Calu3 (cell line): ENCODE measurements at regions of chr1 and their contacts with region 1.

Region 1: DNA sequence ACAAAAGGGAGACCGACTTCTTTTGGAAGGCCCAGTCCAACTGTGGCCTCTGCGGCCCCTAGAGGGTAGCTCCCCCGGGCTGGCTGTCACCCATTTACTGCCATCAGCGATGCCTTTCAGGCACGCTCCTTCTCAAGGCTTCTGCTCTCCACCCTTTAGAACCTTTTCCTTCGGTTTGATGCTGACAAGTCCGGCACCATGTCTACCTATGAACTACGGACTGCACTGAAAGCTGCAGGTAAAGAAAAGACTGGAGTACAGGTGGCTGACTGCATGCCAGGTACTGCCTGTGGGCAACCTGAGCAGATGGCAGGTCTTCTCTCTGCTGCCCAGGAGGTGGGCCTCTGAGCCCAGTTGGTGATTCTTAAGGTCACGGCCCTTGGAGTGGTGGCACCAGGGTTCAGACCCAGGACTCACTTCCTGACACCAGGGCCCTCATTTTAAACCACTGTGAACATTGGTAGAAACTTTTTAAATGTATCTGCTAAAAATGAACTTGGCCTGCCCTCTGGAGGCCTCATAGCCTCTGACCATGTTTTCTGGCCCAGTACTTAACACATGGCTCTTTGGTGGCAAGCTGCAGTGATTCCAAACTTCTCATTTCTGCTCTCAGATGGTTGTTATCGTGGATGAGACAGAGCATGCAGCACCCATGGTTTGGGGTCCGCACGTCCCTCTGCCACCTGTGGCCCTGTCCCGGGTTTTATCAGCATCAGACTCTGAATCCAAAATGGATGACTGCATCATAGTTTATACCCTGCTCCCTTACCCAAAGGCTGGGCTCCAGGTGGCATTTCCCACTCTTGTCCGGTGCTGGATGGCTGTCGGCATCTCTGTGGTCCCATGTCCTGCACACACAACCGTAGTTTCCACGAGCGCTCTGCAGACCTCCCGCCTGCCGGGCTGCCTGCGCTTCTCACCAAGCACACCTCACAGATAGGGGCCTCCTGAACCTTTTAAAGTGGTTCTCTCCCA is 45.8 kb downstream of the CAPN9 start:
- DNase-seq: no peak
- H3K4me3 Mint-ChIP-seq: no peak overlapping the region
- H3K27ac Mint-ChIP-seq: no peak overlapping the region
- H3K4me1 Mint-ChIP-seq: no peaks in the 10 kb centered on the region
- H3K27me3 Mint-ChIP-seq: peaks cover 7% of the 10 kb centered on the region
- CTCF ChIP-seq: no peak

Region 2: DNA sequence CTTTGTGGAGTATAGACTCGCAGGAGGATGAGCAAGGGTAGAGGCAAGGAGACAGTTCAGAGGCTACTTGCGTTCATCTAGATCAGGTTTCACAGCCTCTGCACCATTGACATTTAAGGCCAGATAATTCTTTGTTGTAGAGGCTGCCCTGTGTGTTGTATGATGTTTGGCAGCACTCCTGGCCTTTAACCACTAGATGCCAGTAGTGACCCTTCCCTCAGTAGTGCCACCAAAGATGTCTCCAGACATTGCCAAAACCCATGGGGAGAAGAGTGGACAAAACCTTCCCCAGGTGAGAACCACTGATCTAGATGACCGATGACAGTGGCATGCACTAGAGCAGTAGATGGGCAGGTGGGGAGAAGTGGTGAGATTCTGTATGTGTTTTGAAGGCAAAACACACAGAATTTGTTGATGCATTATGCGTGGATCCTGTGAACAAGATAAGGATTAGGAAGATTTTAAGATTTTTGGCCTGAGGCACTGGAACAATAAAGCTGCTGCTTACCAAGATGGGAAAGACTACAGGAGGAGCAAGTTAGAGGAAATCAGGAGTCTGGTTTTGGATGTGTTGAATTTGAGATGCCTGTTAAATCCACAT is 160.6 kb before region 1 on chr1:
- CTCF ChIA-PET with region 1: no interaction called
- intact Hi-C with region 1: loop called (anchors 1 kb)
- DNase-seq: peak; percentile 54
- H3K4me3 Mint-ChIP-seq: no peak overlapping the region
- H3K27ac Mint-ChIP-seq: no peak overlapping the region
- H3K4me1 Mint-ChIP-seq: no peaks in the 10 kb centered on the region
- H3K27me3 Mint-ChIP-seq: no peaks in the 10 kb centered on the region
- CTCF ChIP-seq: peak; percentile 78